ENCODE measurements at regions of chr9 and their contacts with region 1.

Region 1: GRCh38 chr9:89602978-89603766 is 1.6 kb upstream of the GADD45G start:
- DNase-seq: peak; percentile 94
- ATAC-seq: peak; percentile 27
- H3K4me3 Mint-ChIP-seq: peak overlapping the region; percentile 79
- H3K27ac Mint-ChIP-seq: peak overlapping the region; percentile 53
- H3K4me1 Mint-ChIP-seq: peaks cover 31% of the 10 kb centered on the region
- H3K27me3 Mint-ChIP-seq: peaks cover 18% of the 10 kb centered on the region

Region 2: GRCh38 chr9:89576404-89576839 is 26.8 kb before region 1 on chr9:
- CTCF ChIA-PET with region 1: interaction called, 21 read pairs
- POLR2A ChIA-PET with region 1: interaction called, 3 read pairs
- DNase-seq: peak; percentile 54
- ATAC-seq: no peak
- H3K4me3 Mint-ChIP-seq: no peak overlapping the region
- H3K27ac Mint-ChIP-seq: no peak overlapping the region
- H3K4me1 Mint-ChIP-seq: peaks cover 36% of the 10 kb centered on the region
- H3K27me3 Mint-ChIP-seq: peaks cover 34% of the 10 kb centered on the region

Region 3: GRCh38 chr9:89701221-89701798 is 98.1 kb after region 1 on chr9:
- CTCF ChIA-PET with region 1: interaction called, 21 read pairs
- POLR2A ChIA-PET with region 1: interaction called, 9 read pairs
- DNase-seq: peak; percentile 80
- ATAC-seq: peak; percentile 89
- H3K4me3 Mint-ChIP-seq: peak overlapping the region; percentile 70
- H3K27ac Mint-ChIP-seq: peak overlapping the region; percentile 90
- H3K4me1 Mint-ChIP-seq: peaks cover 81% of the 10 kb centered on the region
- H3K27me3 Mint-ChIP-seq: no peaks in the 10 kb centered on the region

Region 4: DNA sequence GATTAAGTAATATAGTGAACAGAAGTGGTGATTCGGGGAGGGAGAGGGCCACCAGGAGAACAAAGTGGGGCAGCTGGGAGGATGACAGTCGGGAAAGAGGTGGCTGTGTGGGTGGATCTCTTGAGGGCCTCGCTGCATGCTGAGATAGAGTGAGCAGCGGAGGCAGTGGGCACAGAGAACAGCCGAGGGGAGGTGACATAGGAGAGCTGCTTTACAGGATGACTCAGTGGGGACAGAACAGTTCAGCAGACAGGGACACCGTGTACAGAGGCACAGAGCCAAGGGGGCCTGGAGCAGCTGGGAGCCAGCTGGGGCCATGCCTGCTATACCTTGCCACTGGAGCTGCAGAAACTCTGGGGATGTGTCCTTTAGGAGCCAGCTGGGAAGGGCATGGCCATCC is 275.5 kb after region 1 on chr9:
- CTCF ChIA-PET with region 1: interaction called, 12 read pairs
- POLR2A ChIA-PET with region 1: no interaction called
- DNase-seq: no peak
- ATAC-seq: no peak
- H3K4me3 Mint-ChIP-seq: no peak overlapping the region
- H3K27ac Mint-ChIP-seq: no peak overlapping the region
- H3K4me1 Mint-ChIP-seq: no peaks in the 10 kb centered on the region
- H3K27me3 Mint-ChIP-seq: no peaks in the 10 kb centered on the region

Region 5: GRCh38 chr9:89952401-89952800 is 349.2 kb after region 1 on chr9:
- CTCF ChIA-PET with region 1: interaction called, 10 read pairs
- POLR2A ChIA-PET with region 1: no interaction called
- DNase-seq: no peak
- ATAC-seq: no peak
- H3K4me3 Mint-ChIP-seq: no peak overlapping the region
- H3K27ac Mint-ChIP-seq: no peak overlapping the region
- H3K4me1 Mint-ChIP-seq: peaks cover 4% of the 10 kb centered on the region
- H3K27me3 Mint-ChIP-seq: peaks cover 8% of the 10 kb centered on the region

Region 6: GRCh38 chr9:90095682-90096081 is 492.5 kb after region 1 on chr9:
- CTCF ChIA-PET with region 1: interaction called, 287 read pairs
- POLR2A ChIA-PET with region 1: no interaction called
- DNase-seq: no peak
- ATAC-seq: peak; percentile 48
- H3K4me3 Mint-ChIP-seq: no peak overlapping the region
- H3K27ac Mint-ChIP-seq: no peak overlapping the region
- H3K4me1 Mint-ChIP-seq: peaks cover 27% of the 10 kb centered on the region
- H3K27me3 Mint-ChIP-seq: peaks cover 38% of the 10 kb centered on the region

Measured in activated CD8-positive, alpha-beta T cell treated with anti-CD3 and anti-CD28 coated beads, Interleukin-2, amount 10 ng/mL, durations not matched to agents 7 days and 5 days (primary cell).